Heart left ventricle (tissue), 16 donors: ENCODE measurements at regions of chr15 and their contacts with region 1.

Region 1: DNA sequence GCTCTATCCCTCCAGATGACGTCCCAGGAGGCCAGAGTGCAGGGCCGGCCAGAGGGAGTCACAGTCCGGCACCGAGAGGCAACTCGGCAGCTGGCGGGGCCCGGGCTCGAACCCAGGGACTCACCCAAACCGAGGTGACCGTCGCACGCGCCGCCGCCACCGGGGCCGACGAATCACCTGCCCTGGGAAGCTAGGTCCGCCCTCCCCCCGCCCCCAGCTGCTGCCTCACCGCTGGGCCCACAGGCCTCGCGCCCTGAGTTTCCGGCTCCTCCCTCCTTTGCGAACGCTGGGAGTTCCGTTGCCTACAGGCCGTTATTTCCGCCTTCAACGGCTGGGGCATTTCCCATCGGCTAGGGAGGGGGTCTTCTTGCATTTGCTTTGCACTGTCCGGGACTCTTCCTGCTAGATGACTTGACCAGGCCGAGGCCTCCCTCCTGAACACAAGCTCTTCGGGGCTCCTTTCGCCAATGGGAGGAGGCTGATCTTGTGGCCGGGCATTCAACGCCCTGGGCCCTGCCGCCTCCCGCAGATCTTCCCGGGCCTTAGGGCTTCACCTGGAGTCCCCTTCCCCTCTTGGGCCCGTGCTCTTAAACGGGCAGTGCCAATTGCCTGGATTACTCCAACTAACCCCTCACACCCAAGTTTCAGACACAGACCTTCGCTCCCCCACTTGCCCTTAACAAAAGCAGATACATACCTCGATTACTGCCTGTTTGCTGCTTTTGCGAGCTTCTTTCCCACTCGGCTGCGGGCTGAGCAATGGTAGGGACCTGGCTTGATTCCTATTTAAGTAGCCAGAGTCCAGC is at the start of gene SNUPN:
- DNase-seq: peak; percentile 96 to 97 (median 96)
- ATAC-seq: peak; percentile 85 to 95 (median 94)
- H3K4me3 ChIP-seq: peak within 1 kb of the TSS; percentile 67 to 98 (median 81)
- H3K27ac ChIP-seq: peak within 1 kb of the TSS; percentile 93 to 100 (median 97)
- H3K4me1 ChIP-seq: peaks cover 0 to 25% (median 13%) of the 10 kb centered on the region in 12 donors
- H3K27me3 ChIP-seq: no peaks in the 10 kb centered on the region
- CTCF ChIP-seq: no peak
- POLR2A ChIP-seq: peak in 1 of 2 donors; percentile 57
- total RNA-seq, gene SNUPN: 13.2 to 21.6 (median 14.5) TPM

Region 2: GRCh38 chr15:75349851-75350588 is 275.7 kb before region 1 on chr15:
- intact Hi-C with region 1: no loop called
- DNase-seq: peak in 2 of 5 donors; percentile 29 to 55
- ATAC-seq: no peak
- H3K4me3 ChIP-seq: no peak overlapping the region
- H3K27ac ChIP-seq: peak overlapping the region in 1 of 12 donors; percentile 11
- H3K4me1 ChIP-seq: peaks cover 0 to 33% (median 11%) of the 10 kb centered on the region in 12 donors
- H3K27me3 ChIP-seq: peaks cover 0 to 4% (median 0%) of the 10 kb centered on the region in 9 donors
- CTCF ChIP-seq: no peak
- POLR2A ChIP-seq: no peak

Region 3: DNA sequence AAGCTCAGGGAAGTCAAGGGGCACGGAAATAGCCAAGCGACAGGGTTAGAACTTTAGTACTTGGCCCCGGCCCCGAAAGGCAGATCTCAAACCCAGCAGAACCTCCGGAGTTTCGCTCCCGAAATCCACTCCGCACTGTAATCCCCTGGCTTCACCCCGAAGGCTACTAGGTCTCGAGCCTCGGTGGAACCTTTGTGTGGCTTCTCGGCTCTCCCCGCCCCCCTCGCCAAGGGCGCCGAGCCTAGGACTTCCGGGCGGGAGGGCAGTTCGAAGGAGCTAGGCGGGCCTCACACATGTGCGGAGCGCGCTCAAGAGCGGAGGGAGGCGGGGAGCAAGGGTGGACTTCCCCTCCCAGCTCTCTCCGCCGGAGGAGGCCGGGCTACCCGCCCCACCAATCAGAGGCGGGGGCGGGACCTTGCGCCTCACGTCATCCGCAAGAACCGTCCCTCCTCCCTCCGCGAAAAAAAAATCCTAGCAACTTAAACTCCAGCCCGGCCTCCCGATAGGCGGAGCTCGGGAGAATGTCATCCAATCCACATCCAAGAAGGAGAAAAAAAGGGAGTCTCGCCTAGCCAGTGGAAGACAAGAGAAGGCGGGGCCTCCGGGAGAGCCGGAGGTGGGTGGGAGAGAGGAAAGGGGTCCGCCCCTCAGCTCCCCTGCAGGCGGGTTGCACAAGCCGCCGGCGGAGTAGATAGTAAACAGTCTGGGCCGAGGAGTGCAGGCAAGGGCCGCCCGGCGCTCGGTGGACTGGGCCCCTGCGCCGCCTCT is 171.9 kb before region 1 on chr15:
- intact Hi-C with region 1: loop called in 3 of 10 experiments (anchors 1 to 10 kb)
- DNase-seq: peak; percentile 98 to 99 (median 98)
- ATAC-seq: peak; percentile 65 to 76 (median 70)
- H3K4me3 ChIP-seq: peak overlapping the region; percentile 84 to 98 (median 95)
- H3K27ac ChIP-seq: peak overlapping the region; percentile 94 to 100 (median 98)
- H3K4me1 ChIP-seq: peaks cover 4 to 37% (median 26%) of the 10 kb centered on the region in 12 donors
- H3K27me3 ChIP-seq: no peaks in the 10 kb centered on the region
- CTCF ChIP-seq: peak in 4 of 12 donors; percentile 10 to 39 (median 20)
- POLR2A ChIP-seq: peak in 1 of 2 donors; percentile 52

Region 4: DNA sequence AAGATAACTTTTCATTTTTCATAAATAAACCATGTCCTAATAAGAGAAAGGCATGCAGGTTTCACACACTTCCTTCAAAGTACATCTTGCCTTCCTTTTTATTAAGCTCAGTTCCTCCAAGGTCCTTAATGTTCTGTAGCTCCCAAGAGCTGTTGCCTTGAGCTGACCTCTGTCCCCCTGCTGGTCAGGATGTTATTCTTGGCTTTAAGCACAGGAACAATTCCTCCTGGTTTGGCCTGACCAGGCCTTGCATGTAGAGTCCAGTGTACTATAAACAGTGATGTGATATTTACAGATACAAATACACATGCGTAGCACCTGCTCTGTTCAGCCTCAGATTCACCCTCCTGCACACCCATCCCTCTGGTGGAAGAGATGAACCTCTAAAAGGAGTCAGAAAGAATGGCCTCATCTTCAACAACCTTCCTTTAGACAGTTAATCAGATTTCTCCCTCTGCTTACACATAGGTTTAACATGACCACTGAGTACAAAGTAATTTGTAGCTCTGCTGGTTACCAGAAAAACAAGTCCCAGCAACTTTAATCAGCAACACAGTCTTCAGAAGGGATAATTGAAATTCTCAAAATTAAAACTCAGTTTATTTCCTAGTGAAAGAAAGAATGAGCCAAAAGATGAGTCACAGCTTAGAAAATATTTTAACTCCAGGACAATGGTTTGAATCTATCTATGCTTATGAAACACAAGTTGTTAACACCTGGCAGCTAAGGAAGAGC is 93.2 kb before region 1 on chr15:
- intact Hi-C with region 1: loop called in 2 of 10 experiments (anchors 1 to 10 kb)
- DNase-seq: peak; percentile 63 to 82 (median 70)
- ATAC-seq: peak; percentile 90 to 97 (median 96)
- H3K4me3 ChIP-seq: no peak overlapping the region
- H3K27ac ChIP-seq: peak overlapping the region; percentile 53 to 82 (median 72)
- H3K4me1 ChIP-seq: peaks cover 0 to 45% (median 31%) of the 10 kb centered on the region in 12 donors
- H3K27me3 ChIP-seq: no peaks in the 10 kb centered on the region
- CTCF ChIP-seq: peak; percentile 30 to 64 (median 50)
- POLR2A ChIP-seq: no peak

Region 5: DNA sequence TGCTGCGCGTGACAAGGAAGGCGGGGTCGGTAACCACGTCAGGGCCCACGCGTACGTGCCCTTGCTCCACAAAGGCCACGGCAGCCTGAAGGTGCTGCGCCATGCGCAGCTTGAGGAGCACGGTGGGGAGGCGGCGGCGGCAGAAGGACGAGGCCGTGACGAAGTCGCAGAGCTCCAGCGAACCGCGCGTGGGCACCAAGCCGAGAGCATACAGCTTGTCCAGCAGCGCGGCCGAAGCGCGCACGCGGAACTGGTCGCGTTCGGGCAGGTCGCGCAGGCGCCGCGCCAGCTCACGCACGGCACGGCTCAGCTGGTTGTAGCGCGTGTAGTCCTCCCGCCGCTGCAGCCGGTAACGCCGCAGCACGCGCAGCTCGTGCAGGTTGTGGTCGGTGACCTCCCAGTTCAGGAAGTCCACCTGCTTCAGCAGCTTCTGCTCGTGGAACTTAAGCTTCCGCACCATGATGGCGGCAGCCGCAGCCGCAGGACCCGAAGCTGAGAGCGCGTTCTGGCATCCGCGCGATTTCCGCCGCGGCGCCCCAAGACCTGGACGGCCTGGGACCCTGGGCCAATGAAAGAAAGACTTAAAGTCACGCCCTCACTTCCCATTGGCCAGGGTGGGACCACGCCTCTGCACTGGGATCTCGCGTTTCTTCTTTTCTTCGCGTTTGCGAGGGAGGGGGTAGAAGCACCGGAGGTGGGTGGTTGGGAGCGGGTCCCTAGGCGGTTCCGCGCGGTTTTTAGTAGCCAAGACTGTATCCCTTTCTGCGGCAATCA is 14.2 kb after region 1 on chr15 and contains the start of gene IMP3:
- intact Hi-C with region 1: loop called in 1 of 10 experiments (anchors 1 kb)
- DNase-seq: peak; percentile 95 to 97 (median 95)
- ATAC-seq: peak; percentile 98 to 99 (median 98)
- H3K4me3 ChIP-seq: peak within 1 kb of the TSS; percentile 71 to 99 (median 86)
- H3K27ac ChIP-seq: peak within 1 kb of the TSS; percentile 86 to 99 (median 94)
- H3K4me1 ChIP-seq: peaks cover 9 to 44% (median 30%) of the 10 kb centered on the region in 12 donors
- H3K27me3 ChIP-seq: no peaks in the 10 kb centered on the region
- CTCF ChIP-seq: peak in 1 of 12 donors; percentile 23
- POLR2A ChIP-seq: peak; percentile 82 to 97
- total RNA-seq, gene IMP3: 37.1 to 151 (median 44.5) TPM

Region 6: GRCh38 chr15:76115888-76116885 is 490.4 kb after region 1 on chr15:
- intact Hi-C with region 1: no loop called
- DNase-seq: no peak
- ATAC-seq: no peak
- H3K4me3 ChIP-seq: no peak overlapping the region
- H3K27ac ChIP-seq: no peak overlapping the region
- H3K4me1 ChIP-seq: no peaks in the 10 kb centered on the region
- H3K27me3 ChIP-seq: peaks cover 0 to 23% (median 0%) of the 10 kb centered on the region in 9 donors
- CTCF ChIP-seq: no peak
- POLR2A ChIP-seq: no peak